CD8-positive, alpha-beta T cell (primary cell): ENCODE measurements at regions of chr19 and their contacts with region 1.

Region 1: DNA sequence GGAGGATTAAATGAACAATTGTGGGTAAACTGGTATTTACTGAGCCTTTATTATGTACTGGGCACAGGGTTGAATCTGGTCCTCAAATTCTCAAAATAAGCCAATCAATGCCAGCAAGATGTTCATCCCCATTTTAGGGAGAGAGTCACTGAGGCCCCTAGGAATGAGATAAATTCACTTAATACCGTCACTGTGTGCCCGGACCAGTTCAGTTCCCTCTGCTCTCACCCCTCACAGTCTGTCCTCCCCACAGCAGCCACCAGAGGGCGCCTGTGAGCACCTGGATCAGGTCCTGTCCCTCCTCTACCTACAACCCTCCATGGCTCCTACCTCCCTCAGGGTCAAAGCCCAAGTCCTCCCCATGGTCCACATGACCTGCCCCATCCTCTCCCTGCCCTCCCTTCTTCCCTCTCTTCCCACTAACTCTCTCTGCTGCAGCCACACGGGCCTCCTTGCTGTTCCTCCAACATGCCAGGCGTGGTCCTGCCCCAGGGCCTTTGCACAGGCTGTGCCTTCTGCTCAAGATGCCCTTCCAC is 42.0 kb upstream of the NFIC start:
- DNase-seq: peak; percentile 58 to 80 (median 68)
- ATAC-seq: peak; percentile 72
- H3K4me3 ChIP-seq: no peak overlapping the region
- H3K4me3 Mint-ChIP-seq: no peak overlapping the region
- H3K27ac ChIP-seq: no peak overlapping the region
- H3K27ac Mint-ChIP-seq: no peak overlapping the region
- H3K4me1 ChIP-seq: no peaks in the 10 kb centered on the region
- H3K4me1 Mint-ChIP-seq: no peaks in the 10 kb centered on the region
- H3K27me3 ChIP-seq: peaks cover 0 to 3% of the 10 kb centered on the region in 2 experiments
- H3K27me3 Mint-ChIP-seq: peaks cover 11% of the 10 kb centered on the region
- CTCF ChIP-seq: peak; percentile 62

Region 2: DNA sequence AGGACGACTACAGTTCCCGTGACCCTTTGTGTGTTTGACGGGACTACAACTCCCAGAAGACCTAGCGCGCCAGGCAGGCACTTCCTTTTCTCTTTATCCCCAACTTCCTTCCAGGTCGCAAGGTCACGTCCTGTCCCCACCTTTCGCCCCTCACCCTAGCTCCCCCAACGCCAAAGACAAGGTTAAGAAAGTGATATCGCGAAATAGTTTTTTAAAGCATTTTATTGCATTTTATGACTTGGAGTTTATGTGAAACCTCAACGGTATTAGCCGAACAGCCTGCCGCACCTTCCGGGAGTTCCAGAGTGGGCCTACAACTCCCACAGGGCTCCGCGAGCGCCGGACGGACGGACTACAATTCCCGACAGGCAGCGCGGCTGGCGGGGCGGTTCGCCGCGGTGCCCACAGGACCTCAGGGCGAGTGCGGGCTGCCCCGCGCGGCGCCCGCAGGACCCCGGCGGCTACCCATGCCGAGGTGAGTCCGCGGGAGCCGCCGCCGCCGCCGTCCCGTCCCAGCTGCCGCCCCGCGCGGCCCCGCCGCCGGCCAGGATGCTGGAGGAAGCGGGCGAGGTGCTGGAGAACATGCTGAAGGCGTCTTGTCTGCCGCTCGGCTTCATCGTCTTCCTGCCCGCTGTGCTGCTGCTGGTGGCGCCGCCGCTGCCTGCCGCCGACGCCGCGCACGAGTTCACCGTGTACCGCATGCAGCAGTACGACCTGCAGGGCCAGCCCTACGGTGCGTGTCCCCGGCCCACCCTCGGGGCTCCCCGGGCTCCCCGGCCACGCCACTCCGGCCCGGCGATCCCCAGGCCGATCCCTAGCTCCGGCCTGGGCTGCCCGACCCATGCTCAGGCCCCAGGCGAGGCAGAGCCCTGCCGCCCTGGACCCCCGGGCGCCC is 138.7 kb before region 1 on chr19 and contains the start of gene NCLN:
- CTCF ChIA-PET with region 1: no interaction called
- POLR2A ChIA-PET with region 1: no interaction called
- intact Hi-C with region 1: no loop called
- DNase-seq: peak; percentile 91 to 98 (median 94)
- ATAC-seq: peak; percentile 84
- H3K4me3 ChIP-seq: peak within 1 kb of the TSS; percentile 66 to 76
- H3K4me3 Mint-ChIP-seq: peak within 1 kb of the TSS; percentile 92
- H3K27ac ChIP-seq: peak within 1 kb of the TSS; percentile 34 to 84
- H3K27ac Mint-ChIP-seq: peak within 1 kb of the TSS; percentile 89
- H3K4me1 ChIP-seq: peaks cover 67% of the 10 kb centered on the region
- H3K4me1 Mint-ChIP-seq: peaks cover 61% of the 10 kb centered on the region
- H3K27me3 ChIP-seq: no peaks in the 10 kb centered on the region
- H3K27me3 Mint-ChIP-seq: no peaks in the 10 kb centered on the region
- CTCF ChIP-seq: no peak
- total RNA-seq, gene NCLN: 47.3 to 55.7 TPM

Region 3: DNA sequence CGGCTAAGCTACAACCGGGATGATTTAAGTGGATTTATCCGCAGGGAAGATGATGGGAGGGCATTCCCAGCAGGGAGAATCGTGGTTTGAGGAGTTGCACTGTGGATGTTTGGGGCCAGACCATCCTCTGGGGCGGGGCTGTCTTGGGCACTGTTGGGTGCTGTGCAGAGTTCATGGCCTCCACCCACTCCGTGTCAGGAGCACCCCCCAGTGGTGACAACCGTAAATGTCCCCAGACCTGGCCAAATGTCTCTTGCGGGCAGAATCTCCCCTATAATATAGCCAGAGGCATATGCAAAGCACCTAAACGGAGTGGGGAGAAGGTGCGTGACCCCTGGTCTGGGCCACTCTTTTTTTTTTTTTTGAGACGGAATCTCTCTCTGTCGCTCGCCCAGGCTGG is 115.7 kb after region 1 on chr19:
- CTCF ChIA-PET with region 1: interaction called, 4 read pairs
- POLR2A ChIA-PET with region 1: interaction called, 4 read pairs
- intact Hi-C with region 1: loop called (anchors 1 kb)
- DNase-seq: peak; percentile 19 to 68 (median 57)
- ATAC-seq: peak; percentile 63
- H3K4me3 ChIP-seq: no peak overlapping the region
- H3K4me3 Mint-ChIP-seq: no peak overlapping the region
- H3K27ac ChIP-seq: no peak overlapping the region
- H3K27ac Mint-ChIP-seq: no peak overlapping the region
- H3K4me1 ChIP-seq: peaks cover 5% of the 10 kb centered on the region
- H3K4me1 Mint-ChIP-seq: peaks cover 8% of the 10 kb centered on the region
- H3K27me3 ChIP-seq: no peaks in the 10 kb centered on the region
- H3K27me3 Mint-ChIP-seq: no peaks in the 10 kb centered on the region
- CTCF ChIP-seq: peak; percentile 54

Region 4: DNA sequence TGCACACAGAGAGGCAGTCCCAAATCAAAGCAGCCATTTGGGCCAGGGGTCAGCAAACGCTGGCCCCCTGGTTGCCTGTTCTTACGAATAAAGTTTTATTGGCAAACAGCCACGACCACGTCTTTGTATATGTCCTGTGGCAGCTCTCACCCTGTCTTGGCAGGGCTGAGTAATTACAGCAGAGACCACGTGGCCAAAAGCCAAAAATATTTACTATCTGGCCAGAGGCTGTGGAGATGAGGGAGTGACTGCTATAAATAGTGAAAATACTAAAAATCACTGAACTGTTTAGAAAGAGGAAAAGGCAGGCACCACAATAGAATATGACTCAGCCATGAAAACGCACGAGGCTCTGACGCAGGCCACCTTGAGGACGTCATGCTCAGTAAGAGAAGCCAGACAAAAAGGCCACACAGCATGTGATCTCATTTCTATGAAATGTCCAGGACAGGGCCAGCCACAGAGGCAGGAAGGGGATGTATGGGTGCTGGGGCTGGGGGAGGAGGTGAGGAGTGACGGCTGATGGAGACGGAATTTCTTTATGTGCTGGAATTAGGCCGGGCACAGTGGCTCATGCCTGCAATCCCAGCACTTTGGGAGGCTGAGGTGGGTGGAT is 126.5 kb after region 1 on chr19:
- CTCF ChIA-PET with region 1: no interaction called
- POLR2A ChIA-PET with region 1: no interaction called
- intact Hi-C with region 1: no loop called
- DNase-seq: no peak
- ATAC-seq: no peak
- H3K4me3 ChIP-seq: no peak overlapping the region
- H3K4me3 Mint-ChIP-seq: no peak overlapping the region
- H3K27ac ChIP-seq: no peak overlapping the region
- H3K27ac Mint-ChIP-seq: no peak overlapping the region
- H3K4me1 ChIP-seq: no peaks in the 10 kb centered on the region
- H3K4me1 Mint-ChIP-seq: no peaks in the 10 kb centered on the region
- H3K27me3 ChIP-seq: no peaks in the 10 kb centered on the region
- H3K27me3 Mint-ChIP-seq: no peaks in the 10 kb centered on the region
- CTCF ChIP-seq: no peak

Region 5: DNA sequence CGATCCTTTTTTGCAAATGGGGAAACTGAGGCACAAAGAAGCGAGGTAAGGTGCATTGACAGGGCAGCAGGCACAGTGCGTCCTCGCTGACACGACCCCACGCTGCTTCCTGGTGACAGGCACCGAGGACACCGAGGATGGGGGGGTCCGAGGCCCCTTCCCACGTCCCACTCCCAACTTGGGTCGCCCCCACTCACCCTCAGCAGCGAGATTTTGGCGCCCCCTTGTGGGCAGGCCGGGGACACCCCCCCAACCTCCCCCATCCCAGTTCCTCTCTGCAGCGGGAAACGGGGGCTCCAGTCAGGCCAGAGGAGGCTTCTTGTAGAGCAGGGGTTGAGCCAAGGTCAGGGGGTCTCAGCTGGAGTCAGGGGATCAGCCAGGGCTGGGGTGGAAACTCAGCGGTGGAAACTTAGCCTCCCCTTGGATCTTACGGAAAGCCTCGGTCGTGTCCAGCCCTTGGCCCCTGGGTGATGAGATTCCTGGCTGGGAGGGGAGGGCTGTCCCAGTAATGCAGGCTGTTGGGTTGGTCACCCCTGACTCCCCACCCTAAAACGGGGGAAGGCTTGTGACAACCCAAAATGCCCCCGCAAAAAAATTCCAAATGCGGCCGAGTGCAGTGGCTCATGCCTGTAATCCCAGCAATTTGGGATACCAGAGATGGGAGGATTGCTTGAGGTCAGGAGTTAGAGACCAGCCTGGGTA is 147.7 kb after region 1 on chr19:
- CTCF ChIA-PET with region 1: interaction called, 17 read pairs
- POLR2A ChIA-PET with region 1: no interaction called
- intact Hi-C with region 1: loop called (anchors 1 kb)
- DNase-seq: peak in 7 of 9 experiments; percentile 18 to 63 (median 50)
- ATAC-seq: no peak
- H3K4me3 ChIP-seq: no peak overlapping the region
- H3K4me3 Mint-ChIP-seq: no peak overlapping the region
- H3K27ac ChIP-seq: no peak overlapping the region
- H3K27ac Mint-ChIP-seq: no peak overlapping the region
- H3K4me1 ChIP-seq: no peaks in the 10 kb centered on the region
- H3K4me1 Mint-ChIP-seq: no peaks in the 10 kb centered on the region
- H3K27me3 ChIP-seq: peaks cover 0 to 2% of the 10 kb centered on the region in 2 experiments
- H3K27me3 Mint-ChIP-seq: no peaks in the 10 kb centered on the region
- CTCF ChIP-seq: peak; percentile 65

Region 6: DNA sequence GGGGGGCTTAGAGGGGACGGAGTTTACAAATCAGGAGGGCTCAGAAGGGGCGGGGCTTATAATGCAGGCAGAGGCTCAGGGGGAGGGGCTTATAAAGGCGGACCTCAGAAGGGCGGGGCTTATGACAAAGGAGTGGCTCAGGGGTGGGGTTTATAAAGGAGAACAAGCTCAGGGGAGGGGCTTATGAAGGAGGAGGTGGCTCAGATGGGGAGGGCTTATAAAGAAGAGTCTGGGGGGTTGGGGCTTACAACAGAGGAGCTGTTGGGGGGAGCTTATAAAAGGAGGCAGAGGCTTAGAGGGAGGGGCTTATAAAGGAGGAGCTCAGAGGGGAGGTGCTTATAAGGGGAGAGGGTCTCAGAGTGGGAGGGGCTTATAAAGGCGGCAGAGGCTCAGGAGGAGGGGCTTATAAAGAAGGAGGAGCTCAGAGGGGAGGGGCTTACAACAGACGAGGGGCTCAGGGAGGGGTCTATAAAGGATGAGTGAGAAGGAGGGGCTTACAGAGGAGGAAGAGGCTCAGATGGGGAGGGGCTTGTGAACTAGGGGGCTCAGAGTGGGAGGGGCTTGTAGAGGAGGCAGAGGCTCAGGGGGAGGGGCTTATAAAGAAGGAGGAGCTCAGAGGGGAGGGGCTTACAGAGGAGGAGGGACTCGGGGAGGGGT is 154.9 kb after region 1 on chr19:
- CTCF ChIA-PET with region 1: interaction called, 13 read pairs
- POLR2A ChIA-PET with region 1: no interaction called
- intact Hi-C with region 1: no loop called
- DNase-seq: peak in 8 of 9 experiments; percentile 24 to 81 (median 54)
- ATAC-seq: peak; percentile 84
- H3K4me3 ChIP-seq: peak overlapping the region; percentile 33 to 43
- H3K4me3 Mint-ChIP-seq: no peak overlapping the region
- H3K27ac ChIP-seq: no peak overlapping the region
- H3K27ac Mint-ChIP-seq: no peak overlapping the region
- H3K4me1 ChIP-seq: peaks cover 18% of the 10 kb centered on the region
- H3K4me1 Mint-ChIP-seq: peaks cover 10% of the 10 kb centered on the region
- H3K27me3 ChIP-seq: no peaks in the 10 kb centered on the region
- H3K27me3 Mint-ChIP-seq: no peaks in the 10 kb centered on the region
- CTCF ChIP-seq: no peak